Activated T-helper 1 cell treated with anti-CD3 and anti-CD28 coated beads, Interleukin-12 subunit alpha, Interleukin-12 subunit beta, Interleukin-2, Interleukin-4 antibody, amounts not matched to agents 30 ng/mL and 10 ng/mL and 1 ng/mL, durations not matched to agents 14 hours and 24 hours and 36 hours (primary cell): ENCODE measurements at regions of chr1 and their contacts with region 1.

Region 1: DNA sequence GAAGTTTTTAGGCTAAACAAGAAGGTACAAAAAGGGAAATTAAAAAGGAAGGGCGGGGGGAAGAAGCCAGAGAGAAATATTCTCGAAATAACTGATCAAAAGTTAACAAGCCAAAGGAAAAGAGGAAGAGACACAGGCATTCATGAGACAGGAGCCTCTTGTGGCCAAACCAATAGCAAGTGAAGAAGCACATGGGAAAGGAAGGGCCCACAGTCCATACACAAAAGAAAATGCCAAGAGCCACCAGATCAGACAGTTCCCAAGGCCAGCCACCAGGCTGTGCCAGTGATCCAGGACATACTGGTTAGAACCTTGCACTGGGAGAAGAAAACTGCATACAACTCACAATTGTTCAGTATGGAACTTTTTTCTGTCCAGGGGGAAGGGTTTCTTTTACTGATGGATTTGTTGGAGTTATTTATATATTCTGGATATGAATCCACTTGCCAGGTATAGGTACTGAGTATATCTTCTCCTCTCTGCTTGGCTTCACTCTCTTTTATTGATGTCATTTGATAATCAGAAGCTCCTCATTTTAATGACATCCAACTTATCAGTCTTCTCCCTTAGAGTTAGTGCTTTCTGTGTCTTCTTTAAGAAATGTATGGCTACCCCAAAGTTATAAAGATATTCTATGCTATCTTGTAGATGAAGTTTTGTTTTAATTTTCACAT is 76.8 kb downstream of the CD46 start:
- DNase-seq: peak; percentile 36
- H3K4me3 Mint-ChIP-seq: no peak overlapping the region
- H3K27ac Mint-ChIP-seq: peak overlapping the region; percentile 67
- H3K4me1 Mint-ChIP-seq: peaks cover 98% of the 10 kb centered on the region
- H3K27me3 Mint-ChIP-seq: peaks cover 2% of the 10 kb centered on the region

Region 2: DNA sequence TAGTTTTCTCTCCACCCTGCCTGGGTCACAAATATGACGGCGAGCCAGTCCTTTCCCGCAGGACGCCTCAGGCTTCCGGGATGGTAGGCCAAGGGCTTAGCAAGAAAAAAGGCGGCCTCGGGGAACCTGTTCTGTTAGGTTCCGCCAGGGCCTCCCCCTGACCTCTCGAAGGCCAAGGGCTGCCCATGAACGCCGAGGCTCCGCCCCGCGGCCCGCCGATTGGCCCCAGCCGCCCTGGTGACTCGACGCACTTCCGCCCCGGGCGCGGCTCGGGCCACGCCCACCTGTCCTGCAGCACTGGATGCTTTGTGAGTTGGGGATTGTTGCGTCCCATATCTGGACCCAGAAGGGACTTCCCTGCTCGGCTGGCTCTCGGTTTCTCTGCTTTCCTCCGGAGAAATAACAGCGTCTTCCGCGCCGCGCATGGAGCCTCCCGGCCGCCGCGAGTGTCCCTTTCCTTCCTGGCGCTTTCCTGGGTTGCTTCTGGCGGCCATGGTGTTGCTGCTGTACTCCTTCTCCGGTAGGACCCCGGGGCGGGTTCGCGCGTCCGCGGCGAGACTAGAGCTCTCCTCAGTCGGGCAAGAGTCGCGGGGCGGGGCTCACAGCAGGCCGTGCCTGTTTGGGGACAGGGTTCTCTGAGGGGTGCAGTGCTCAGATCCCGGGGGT is 76.7 kb before region 1 on chr1 and contains the start of gene CD46:
- intact Hi-C with region 1: loop called (anchors 1 kb)
- DNase-seq: peak; percentile 93
- H3K4me3 Mint-ChIP-seq: peak within 1 kb of the TSS; percentile 98
- H3K27ac Mint-ChIP-seq: peak within 1 kb of the TSS; percentile 95
- H3K4me1 Mint-ChIP-seq: peaks cover 61% of the 10 kb centered on the region
- H3K27me3 Mint-ChIP-seq: no peaks in the 10 kb centered on the region
- total RNA-seq, gene CD46: 101 and 105 TPM in 2 replicates

Region 3: GRCh38 chr1:207848234-207848633 is 19.6 kb after region 1 on chr1:
- intact Hi-C with region 1: loop called (anchors 1 kb)
- DNase-seq: no peak
- H3K4me3 Mint-ChIP-seq: peak overlapping the region; percentile 64
- H3K27ac Mint-ChIP-seq: peak overlapping the region; percentile 90
- H3K4me1 Mint-ChIP-seq: peaks cover 68% of the 10 kb centered on the region
- H3K27me3 Mint-ChIP-seq: no peaks in the 10 kb centered on the region

Region 4: GRCh38 chr1:207863893-207864535 is 35.4 kb after region 1 on chr1:
- intact Hi-C with region 1: loop called (anchors 1 kb)
- DNase-seq: peak; percentile 40
- H3K4me3 Mint-ChIP-seq: peak overlapping the region; percentile 68
- H3K27ac Mint-ChIP-seq: peak overlapping the region; percentile 85
- H3K4me1 Mint-ChIP-seq: no peaks in the 10 kb centered on the region
- H3K27me3 Mint-ChIP-seq: no peaks in the 10 kb centered on the region

Region 5: DNA sequence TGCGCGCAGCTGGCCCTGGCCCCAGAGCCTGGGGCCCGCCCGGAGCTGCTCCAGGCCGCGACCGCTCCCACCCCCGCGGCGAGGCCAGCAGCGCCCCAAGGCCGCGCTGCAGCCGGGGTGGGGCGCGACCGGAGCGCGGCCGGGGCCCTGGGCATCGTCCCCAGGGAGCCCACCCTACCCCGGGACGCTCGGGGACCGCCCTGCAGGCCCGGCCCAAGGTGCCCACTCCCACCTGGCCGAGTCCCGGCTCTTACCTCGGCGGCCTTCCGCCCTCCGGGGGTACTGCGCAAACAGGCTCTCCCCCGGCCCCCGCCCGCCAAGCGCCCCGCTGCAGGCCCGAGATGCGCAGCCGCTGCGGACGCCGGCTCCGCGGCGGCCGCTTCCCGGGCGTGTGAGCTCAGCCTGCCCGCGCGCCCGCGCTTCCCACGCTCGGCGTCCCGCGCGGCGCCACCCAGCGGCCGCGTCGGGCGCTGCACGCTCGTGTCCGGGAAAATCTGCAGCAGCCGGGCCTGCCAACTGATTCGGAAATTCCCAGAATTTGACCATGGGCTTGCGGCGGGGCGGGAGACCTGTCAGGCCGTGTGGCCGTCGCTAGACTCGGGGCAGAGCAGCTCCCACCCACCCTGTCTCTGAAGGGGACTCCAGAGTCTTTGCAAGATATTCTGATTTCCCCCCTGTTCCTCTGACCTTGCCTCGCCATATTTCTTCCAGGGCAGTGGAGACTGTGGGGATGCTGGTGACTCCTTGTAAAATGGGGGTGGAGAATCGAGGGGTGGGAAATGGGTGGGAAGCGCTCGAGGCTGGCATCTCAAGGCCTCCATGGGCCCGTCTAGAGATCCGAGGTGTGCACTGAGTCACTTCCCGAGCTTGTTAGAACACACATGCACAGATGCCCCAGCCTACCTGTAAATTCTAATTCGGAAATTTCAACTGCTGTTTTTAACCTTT is 40.4 kb after region 1 on chr1:
- intact Hi-C with region 1: loop called (anchors 1 kb)
- DNase-seq: peak; percentile 69
- H3K4me3 Mint-ChIP-seq: peak overlapping the region; percentile 92
- H3K27ac Mint-ChIP-seq: peak overlapping the region; percentile 96
- H3K4me1 Mint-ChIP-seq: peaks cover 45% of the 10 kb centered on the region
- H3K27me3 Mint-ChIP-seq: no peaks in the 10 kb centered on the region

Region 6: DNA sequence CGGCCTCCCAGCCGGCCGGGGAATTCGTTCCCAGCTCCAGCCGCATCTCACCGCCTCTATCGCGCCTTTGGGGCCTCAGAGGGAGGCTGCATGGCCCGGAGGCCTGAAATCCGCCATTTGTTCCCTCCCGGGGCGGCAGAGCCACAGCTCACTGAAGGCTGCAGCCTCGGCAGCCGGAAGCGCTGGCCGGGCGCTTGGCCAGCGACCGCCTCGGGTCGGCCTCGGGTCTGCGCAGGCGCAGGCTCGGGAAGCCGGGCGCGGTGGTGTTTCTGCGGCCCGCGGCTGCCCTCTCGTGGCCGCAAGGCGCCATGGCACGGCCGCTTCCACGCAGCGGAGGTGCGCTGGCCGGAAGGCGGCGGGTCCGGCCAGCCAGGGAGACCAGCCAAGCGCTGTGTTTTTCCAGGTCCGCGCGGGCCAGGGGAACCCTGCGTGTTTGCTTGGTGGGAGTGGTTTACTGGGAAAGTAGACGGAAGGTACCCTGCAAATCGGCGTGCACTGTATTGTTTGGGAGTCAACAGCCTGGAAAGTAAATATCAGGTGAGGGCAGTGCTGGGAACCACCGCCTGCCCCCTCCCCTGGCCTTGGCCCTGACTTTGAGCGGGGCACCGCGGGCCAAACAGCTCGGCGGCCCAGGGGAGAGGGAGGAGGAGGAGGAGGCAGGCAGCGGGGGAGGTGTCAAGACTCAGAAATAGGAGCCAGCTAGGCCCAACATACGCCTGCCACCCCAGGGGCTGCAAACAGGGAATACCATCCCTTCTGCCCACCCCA is 135.0 kb after region 1 on chr1:
- intact Hi-C with region 1: loop called (anchors 1 kb)
- DNase-seq: peak; percentile 84
- H3K4me3 Mint-ChIP-seq: peak overlapping the region; percentile 83
- H3K27ac Mint-ChIP-seq: no peak overlapping the region
- H3K4me1 Mint-ChIP-seq: peaks cover 11% of the 10 kb centered on the region
- H3K27me3 Mint-ChIP-seq: peaks cover 38% of the 10 kb centered on the region